CD8-positive, alpha-beta T cell (primary cell): ENCODE measurements at regions of chr14 and their contacts with region 1.

Region 1: DNA sequence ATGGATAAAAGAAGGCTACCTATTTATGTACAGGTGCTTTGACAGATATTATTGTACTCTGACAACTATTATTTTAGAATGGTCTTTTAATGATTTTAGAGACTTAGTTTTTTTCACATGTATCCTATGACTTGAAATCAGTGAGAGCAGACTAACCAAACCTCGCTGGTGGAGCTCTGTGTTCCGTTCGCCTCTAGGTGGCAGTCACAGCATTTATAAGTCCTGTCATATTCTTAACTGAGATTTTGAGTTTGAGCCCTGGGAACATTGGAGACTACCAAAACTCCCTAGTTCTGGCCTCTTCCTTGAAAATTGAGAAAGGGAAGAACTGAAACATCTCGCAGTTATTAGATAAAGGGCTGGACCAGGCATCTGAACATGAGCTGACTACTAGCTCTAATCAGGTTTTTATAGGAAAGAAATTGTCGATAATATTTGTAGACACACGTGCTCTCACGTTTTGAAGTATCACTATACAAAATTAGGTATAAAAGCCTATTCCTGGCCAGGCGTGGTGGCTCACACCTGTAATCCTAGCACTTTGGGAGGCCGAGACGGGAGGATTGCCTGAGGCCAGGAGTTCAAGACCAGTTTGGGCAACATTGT is 48.3 kb downstream of the TTLL5 start:
- DNase-seq: peak; percentile 23 to 76 (median 62)
- ATAC-seq: peak; percentile 68
- H3K4me3 ChIP-seq: no peak overlapping the region
- H3K4me3 Mint-ChIP-seq: no peak overlapping the region
- H3K27ac ChIP-seq: no peak overlapping the region
- H3K27ac Mint-ChIP-seq: no peak overlapping the region
- H3K4me1 ChIP-seq: no peaks in the 10 kb centered on the region
- H3K4me1 Mint-ChIP-seq: no peaks in the 10 kb centered on the region
- H3K27me3 ChIP-seq: no peaks in the 10 kb centered on the region
- H3K27me3 Mint-ChIP-seq: no peaks in the 10 kb centered on the region
- CTCF ChIP-seq: peak; percentile 78

Region 2: DNA sequence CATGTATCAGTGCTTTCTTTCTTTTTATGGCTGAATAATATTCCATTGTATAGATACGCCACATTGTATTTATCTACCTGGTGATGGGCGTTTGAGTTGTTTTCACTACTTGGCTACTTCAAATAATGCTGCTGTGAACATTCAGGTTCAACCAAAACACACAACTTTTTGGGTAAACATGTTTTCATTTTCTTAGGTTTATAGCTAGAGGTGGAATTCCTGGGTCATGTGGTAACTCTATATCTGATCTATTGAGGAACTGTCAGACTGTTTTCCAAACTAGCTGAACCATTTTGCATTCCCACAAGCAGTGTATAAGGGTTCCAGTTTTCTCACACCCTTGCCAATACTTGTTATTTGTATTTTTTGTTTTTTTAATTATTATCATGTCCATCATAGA is 1601.1 kb before region 1 on chr14:
- CTCF ChIA-PET with region 1: no interaction called
- POLR2A ChIA-PET with region 1: no interaction called
- intact Hi-C with region 1: no loop called
- DNase-seq: no peak
- ATAC-seq: no peak
- H3K4me3 ChIP-seq: no peak overlapping the region
- H3K4me3 Mint-ChIP-seq: no peak overlapping the region
- H3K27ac ChIP-seq: no peak overlapping the region
- H3K27ac Mint-ChIP-seq: no peak overlapping the region
- H3K4me1 ChIP-seq: no peaks in the 10 kb centered on the region
- H3K4me1 Mint-ChIP-seq: no peaks in the 10 kb centered on the region
- H3K27me3 ChIP-seq: no peaks in the 10 kb centered on the region
- H3K27me3 Mint-ChIP-seq: no peaks in the 10 kb centered on the region
- CTCF ChIP-seq: no peak

Region 3: DNA sequence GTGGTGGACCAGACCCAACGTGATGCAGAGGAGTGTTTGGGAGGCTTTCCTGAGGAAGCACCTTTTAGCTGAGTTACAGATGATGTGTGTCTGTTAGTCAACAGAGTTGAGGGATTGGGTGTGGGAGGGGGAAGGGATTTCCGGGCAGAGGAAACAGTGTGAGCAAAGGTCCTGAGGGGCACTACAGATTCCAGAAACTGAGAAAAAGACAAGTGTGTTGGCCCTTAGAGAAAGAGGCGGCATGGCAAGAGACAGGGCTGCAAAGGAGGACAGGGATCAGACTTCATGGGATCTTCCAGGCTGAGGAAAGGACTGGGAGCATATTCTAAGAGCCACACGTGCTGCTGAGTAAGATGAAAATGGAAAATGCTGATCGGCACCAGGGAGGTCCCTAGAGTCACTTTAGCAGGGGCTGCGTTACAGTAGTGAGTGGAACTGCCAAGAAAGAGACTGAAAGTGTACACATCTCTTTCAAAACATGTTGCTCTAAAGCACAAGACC is 776.9 kb before region 1 on chr14:
- CTCF ChIA-PET with region 1: no interaction called
- POLR2A ChIA-PET with region 1: no interaction called
- intact Hi-C with region 1: no loop called
- DNase-seq: no peak
- ATAC-seq: no peak
- H3K4me3 ChIP-seq: no peak overlapping the region
- H3K4me3 Mint-ChIP-seq: no peak overlapping the region
- H3K27ac ChIP-seq: no peak overlapping the region
- H3K27ac Mint-ChIP-seq: no peak overlapping the region
- H3K4me1 ChIP-seq: no peaks in the 10 kb centered on the region
- H3K4me1 Mint-ChIP-seq: peaks cover 12% of the 10 kb centered on the region
- H3K27me3 ChIP-seq: no peaks in the 10 kb centered on the region
- H3K27me3 Mint-ChIP-seq: peaks cover 8% of the 10 kb centered on the region
- CTCF ChIP-seq: no peak

Region 4: GRCh38 chr14:75720842-75721498 is 11.7 kb after region 1 on chr14:
- CTCF ChIA-PET with region 1: interaction called, 14 read pairs
- POLR2A ChIA-PET with region 1: no interaction called
- intact Hi-C with region 1: no loop called
- DNase-seq: no peak
- ATAC-seq: no peak
- H3K4me3 ChIP-seq: no peak overlapping the region
- H3K4me3 Mint-ChIP-seq: no peak overlapping the region
- H3K27ac ChIP-seq: no peak overlapping the region
- H3K27ac Mint-ChIP-seq: no peak overlapping the region
- H3K4me1 ChIP-seq: no peaks in the 10 kb centered on the region
- H3K4me1 Mint-ChIP-seq: peaks cover 3% of the 10 kb centered on the region
- H3K27me3 ChIP-seq: no peaks in the 10 kb centered on the region
- H3K27me3 Mint-ChIP-seq: no peaks in the 10 kb centered on the region
- CTCF ChIP-seq: no peak

Region 5: GRCh38 chr14:76352639-76353281 is 643.5 kb after region 1 on chr14:
- CTCF ChIA-PET with region 1: interaction called, 27 read pairs
- POLR2A ChIA-PET with region 1: no interaction called
- intact Hi-C with region 1: loop called (anchors 1 to 5 kb)
- DNase-seq: peak; percentile 5 to 67 (median 50)
- ATAC-seq: no peak
- H3K4me3 ChIP-seq: no peak overlapping the region
- H3K4me3 Mint-ChIP-seq: peak overlapping the region; percentile 30
- H3K27ac ChIP-seq: no peak overlapping the region
- H3K27ac Mint-ChIP-seq: no peak overlapping the region
- H3K4me1 ChIP-seq: no peaks in the 10 kb centered on the region
- H3K4me1 Mint-ChIP-seq: peaks cover 4% of the 10 kb centered on the region
- H3K27me3 ChIP-seq: peaks cover 0 to 2% of the 10 kb centered on the region in 2 experiments
- H3K27me3 Mint-ChIP-seq: peaks cover 33% of the 10 kb centered on the region
- CTCF ChIP-seq: peak; percentile 51

Region 6: DNA sequence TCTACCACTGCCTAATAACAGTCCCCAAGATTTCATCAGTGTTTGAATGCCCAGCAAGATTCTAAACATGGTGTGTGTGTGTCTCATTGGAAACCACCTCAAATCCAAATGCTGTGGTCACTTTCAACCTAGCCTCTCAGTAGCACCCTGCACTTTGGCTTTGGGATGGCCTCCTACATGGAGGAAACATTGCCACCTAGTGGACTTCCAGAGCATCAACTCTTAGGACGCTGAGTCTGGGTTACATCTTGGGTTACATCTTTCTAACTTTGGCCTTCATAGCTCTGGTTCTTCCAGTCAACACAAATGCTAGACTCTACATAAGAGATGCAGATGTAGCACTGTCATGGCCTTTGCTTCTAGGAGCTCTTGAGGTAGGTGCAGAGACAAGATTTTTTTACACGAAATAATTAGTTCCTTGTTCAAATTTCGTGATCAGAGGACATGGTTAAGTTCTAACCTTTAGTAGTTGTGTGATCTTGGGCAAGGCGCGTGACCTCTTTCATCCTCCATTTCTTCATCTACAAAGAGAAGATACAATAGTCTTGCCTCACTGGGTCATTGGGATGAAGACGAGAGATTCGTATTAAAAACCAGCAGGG is 938.5 kb after region 1 on chr14:
- CTCF ChIA-PET with region 1: no interaction called
- POLR2A ChIA-PET with region 1: no interaction called
- intact Hi-C with region 1: loop called in 1 of 2 experiments (anchors 5 kb)
- DNase-seq: peak in 2 of 9 experiments; percentile 23 to 37
- ATAC-seq: no peak
- H3K4me3 ChIP-seq: no peak overlapping the region
- H3K4me3 Mint-ChIP-seq: no peak overlapping the region
- H3K27ac ChIP-seq: no peak overlapping the region
- H3K27ac Mint-ChIP-seq: no peak overlapping the region
- H3K4me1 ChIP-seq: no peaks in the 10 kb centered on the region
- H3K4me1 Mint-ChIP-seq: no peaks in the 10 kb centered on the region
- H3K27me3 ChIP-seq: no peaks in the 10 kb centered on the region
- H3K27me3 Mint-ChIP-seq: peaks cover 6% of the 10 kb centered on the region
- CTCF ChIP-seq: peak; percentile 59